ENCODE measurements at regions of chr5 and their contacts with region 1.

Region 1: GRCh38 chr5:43066799-43067741 is 27.0 kb upstream of the ANXA2R start:
- DNase-seq: peak; percentile 89 to 90
- H3K4me3 ChIP-seq: peak overlapping the region; percentile 57
- H3K4me3 Mint-ChIP-seq: peak overlapping the region; percentile 88
- H3K27ac Mint-ChIP-seq: peak overlapping the region; percentile 86
- H3K4me1 ChIP-seq: peaks cover 20% of the 10 kb centered on the region
- H3K4me1 Mint-ChIP-seq: peaks cover 19% of the 10 kb centered on the region
- H3K27me3 ChIP-seq: no peaks in the 10 kb centered on the region
- H3K27me3 Mint-ChIP-seq: no peaks in the 10 kb centered on the region
- CTCF ChIP-seq: no peak

Region 2: GRCh38 chr5:43040287-43041098 is 26.6 kb before region 1 on chr5 and contains the start of gene ANXA2R:
- CTCF ChIA-PET with region 1: interaction called, 23 read pairs
- POLR2A ChIA-PET with region 1: interaction called, 5 read pairs
- intact Hi-C with region 1: loop called (anchors 1 kb)
- DNase-seq: peak; percentile 92 to 93
- H3K4me3 ChIP-seq: peak within 1 kb of the TSS; percentile 80
- H3K4me3 Mint-ChIP-seq: peak within 1 kb of the TSS; percentile 86
- H3K27ac Mint-ChIP-seq: peak within 1 kb of the TSS; percentile 58
- H3K4me1 ChIP-seq: no peaks in the 10 kb centered on the region
- H3K4me1 Mint-ChIP-seq: no peaks in the 10 kb centered on the region
- H3K27me3 ChIP-seq: no peaks in the 10 kb centered on the region
- H3K27me3 Mint-ChIP-seq: no peaks in the 10 kb centered on the region
- CTCF ChIP-seq: peak; percentile 87 to 88
- total RNA-seq, gene ANXA2R: 3.1 and 4.1 TPM in 2 replicates

Region 3: DNA sequence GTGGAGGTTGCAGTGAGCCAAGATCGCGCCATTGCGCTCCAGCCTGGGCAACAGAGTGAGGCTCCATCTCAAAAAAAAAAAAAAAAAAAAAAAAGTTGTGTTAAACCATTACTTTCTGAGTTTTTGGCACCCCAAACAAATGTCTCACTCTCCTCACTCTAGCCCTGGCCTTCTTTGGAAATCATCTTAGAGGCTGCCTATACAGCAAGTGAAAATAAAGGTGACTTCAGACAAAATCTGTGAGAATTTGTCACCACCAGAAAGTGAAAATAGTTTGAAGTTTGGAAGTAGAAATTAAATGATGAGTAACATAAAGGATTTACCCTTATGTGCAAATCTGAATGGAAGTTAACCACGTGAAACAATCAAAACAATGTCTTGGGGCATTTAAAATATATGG is 46.5 kb after region 1 on chr5:
- CTCF ChIA-PET with region 1: no interaction called
- POLR2A ChIA-PET with region 1: no interaction called
- intact Hi-C with region 1: no loop called
- DNase-seq: no peak
- H3K4me3 ChIP-seq: no peak overlapping the region
- H3K4me3 Mint-ChIP-seq: no peak overlapping the region
- H3K27ac Mint-ChIP-seq: no peak overlapping the region
- H3K4me1 ChIP-seq: peaks cover 3% of the 10 kb centered on the region; the same call in 1 of the 2 replicates
- H3K4me1 Mint-ChIP-seq: no peaks in the 10 kb centered on the region
- H3K27me3 ChIP-seq: no peaks in the 10 kb centered on the region
- H3K27me3 Mint-ChIP-seq: peaks cover 3% of the 10 kb centered on the region
- CTCF ChIP-seq: no peak

Measured in Caco-2 (cell line).